Activated T-helper 1 cell treated with anti-CD3 and anti-CD28 coated beads, Interleukin-12 subunit alpha, Interleukin-12 subunit beta, Interleukin-2, Interleukin-4 antibody, amounts not matched to agents 30 ng/mL and 10 ng/mL and 1 ng/mL, durations not matched to agents 14 hours and 24 hours and 36 hours (primary cell): ENCODE measurements at regions of chr19 and their contacts with region 1.

Region 1: GRCh38 chr19:49640113-49640898 is at the start of gene RRAS:
- DNase-seq: peak; percentile 100
- H3K4me3 Mint-ChIP-seq: peak within 1 kb of the TSS; percentile 94
- H3K27ac Mint-ChIP-seq: peak within 1 kb of the TSS; percentile 99
- H3K4me1 Mint-ChIP-seq: peaks cover 55% of the 10 kb centered on the region
- H3K27me3 Mint-ChIP-seq: no peaks in the 10 kb centered on the region
- total RNA-seq, gene RRAS: 4.4 and 4.7 TPM in 2 replicates

Region 2: GRCh38 chr19:48637170-48637947 is 1002.9 kb before region 1 on chr19 and contains the start of gene DBP:
- intact Hi-C with region 1: loop called (anchors 2 kb)
- DNase-seq: peak; percentile 98
- H3K4me3 Mint-ChIP-seq: peak within 1 kb of the TSS; percentile 97
- H3K27ac Mint-ChIP-seq: peak within 1 kb of the TSS; percentile 100
- H3K4me1 Mint-ChIP-seq: peaks cover 29% of the 10 kb centered on the region
- H3K27me3 Mint-ChIP-seq: peaks cover 4% of the 10 kb centered on the region
- total RNA-seq, gene DBP: 8.5 and 9.1 TPM in 2 replicates

Region 3: DNA sequence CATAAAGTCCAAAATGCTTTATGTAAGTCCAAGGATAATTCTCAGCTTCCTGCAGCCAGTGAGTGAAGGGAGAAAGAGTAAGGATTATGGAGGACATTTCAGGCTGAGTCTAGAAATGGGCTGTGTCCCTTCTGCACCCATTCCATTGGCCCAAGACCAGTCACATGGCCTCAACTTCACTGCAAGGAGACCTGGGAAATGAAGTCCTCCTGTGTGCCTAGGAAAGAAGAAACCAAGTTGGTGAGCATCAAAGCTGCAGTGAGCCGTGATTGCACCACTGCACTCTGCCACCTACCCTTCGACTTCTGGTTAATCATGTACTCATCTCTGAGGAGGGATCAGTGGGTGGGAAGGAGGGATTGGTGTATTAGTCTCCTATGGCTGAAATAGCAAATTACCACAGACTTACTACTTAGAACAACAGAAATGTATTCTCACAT is 308.7 kb before region 1 on chr19:
- intact Hi-C with region 1: no loop called
- DNase-seq: peak; percentile 56
- H3K4me3 Mint-ChIP-seq: no peak overlapping the region
- H3K27ac Mint-ChIP-seq: peak overlapping the region; percentile 14
- H3K4me1 Mint-ChIP-seq: peaks cover 79% of the 10 kb centered on the region
- H3K27me3 Mint-ChIP-seq: no peaks in the 10 kb centered on the region

Region 4: DNA sequence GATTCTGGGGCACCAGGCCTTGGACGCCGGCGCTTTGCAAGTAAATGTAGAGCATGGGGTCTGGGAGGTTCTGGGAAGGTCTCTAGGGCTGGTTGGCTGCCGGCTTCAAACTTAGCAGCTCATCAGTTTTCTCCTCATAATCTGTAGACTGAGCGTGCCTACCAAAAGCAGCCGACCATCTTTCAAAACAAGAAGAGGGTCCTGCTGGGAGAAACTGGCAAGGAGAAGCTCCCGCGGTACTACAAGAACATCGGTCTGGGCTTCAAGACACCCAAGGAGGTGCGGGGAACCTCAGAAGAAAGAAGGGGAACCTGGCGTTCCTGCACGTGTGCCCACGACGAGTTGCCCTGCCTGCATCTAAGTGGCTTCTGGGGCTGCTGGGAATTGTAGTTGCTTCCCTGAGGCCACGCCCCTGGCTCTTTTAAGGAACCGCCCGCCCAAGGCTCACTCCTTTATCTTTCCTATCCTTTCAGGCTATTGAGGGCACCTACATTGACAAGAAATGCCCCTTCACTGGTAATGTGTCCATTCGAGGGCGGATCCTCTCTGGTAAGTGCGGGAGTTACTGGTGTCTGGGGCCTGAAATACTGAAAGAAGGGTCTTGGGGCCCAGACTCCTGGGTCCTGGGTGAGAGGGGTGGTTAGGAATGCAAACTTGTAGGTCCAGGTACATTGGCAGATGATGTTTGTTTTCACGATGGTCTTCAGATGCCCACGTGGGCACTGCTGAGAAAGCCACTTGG is 143.1 kb before region 1 on chr19:
- intact Hi-C with region 1: loop called (anchors 1 kb)
- DNase-seq: peak; percentile 65
- H3K4me3 Mint-ChIP-seq: peak overlapping the region; percentile 91
- H3K27ac Mint-ChIP-seq: peak overlapping the region; percentile 94
- H3K4me1 Mint-ChIP-seq: peaks cover 64% of the 10 kb centered on the region
- H3K27me3 Mint-ChIP-seq: no peaks in the 10 kb centered on the region

Region 5: DNA sequence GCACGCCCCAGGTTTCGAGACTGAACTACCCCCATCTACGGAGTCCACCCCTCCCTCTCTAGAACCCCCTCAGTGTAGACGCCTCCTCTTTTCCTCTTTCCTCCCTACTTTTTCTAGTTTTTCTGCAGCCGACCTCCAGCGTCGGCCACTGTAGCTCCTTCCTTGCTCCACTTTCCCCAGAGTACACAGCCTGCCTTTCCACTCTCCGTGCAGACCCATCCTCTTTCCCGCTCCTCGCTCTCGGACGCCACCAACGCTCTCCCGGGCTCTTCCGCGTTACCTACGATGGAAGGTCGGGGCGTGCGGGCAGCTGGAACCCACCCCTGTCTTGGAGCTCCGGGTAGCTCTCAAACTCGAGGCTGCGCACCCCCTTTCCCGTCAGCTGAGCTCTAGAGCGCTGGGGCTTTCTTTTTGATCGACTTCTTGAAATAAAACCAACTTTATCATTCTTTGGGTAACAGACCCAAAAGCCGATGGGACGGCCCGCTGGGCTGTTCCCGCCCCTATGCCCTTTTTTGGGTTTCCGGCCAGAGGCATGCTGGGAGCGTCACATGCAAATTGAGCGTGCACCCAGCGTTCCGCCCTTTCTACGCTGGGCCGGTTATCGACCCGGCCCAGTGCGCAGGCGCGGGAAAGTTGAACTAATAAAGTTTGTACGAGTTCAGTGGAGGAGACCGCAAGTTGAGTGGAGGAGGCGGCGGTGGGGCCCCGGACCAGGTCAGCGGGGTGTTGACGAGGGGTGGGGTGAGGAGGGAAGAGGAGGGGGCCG is 25.2 kb after region 1 on chr19 and contains the starts of genes BCL2L12 and IRF3:
- intact Hi-C with region 1: loop called (anchors 1 kb)
- DNase-seq: peak; percentile 98
- H3K4me3 Mint-ChIP-seq: peak within 1 kb of the TSS; percentile 98
- H3K27ac Mint-ChIP-seq: peak within 1 kb of the TSS; percentile 93
- H3K4me1 Mint-ChIP-seq: peaks cover 32% of the 10 kb centered on the region
- H3K27me3 Mint-ChIP-seq: no peaks in the 10 kb centered on the region
- total RNA-seq, gene BCL2L12: 72.2 and 73.7 TPM in 2 replicates
- total RNA-seq, gene IRF3: 149 and 156 TPM in 2 replicates

Region 6: DNA sequence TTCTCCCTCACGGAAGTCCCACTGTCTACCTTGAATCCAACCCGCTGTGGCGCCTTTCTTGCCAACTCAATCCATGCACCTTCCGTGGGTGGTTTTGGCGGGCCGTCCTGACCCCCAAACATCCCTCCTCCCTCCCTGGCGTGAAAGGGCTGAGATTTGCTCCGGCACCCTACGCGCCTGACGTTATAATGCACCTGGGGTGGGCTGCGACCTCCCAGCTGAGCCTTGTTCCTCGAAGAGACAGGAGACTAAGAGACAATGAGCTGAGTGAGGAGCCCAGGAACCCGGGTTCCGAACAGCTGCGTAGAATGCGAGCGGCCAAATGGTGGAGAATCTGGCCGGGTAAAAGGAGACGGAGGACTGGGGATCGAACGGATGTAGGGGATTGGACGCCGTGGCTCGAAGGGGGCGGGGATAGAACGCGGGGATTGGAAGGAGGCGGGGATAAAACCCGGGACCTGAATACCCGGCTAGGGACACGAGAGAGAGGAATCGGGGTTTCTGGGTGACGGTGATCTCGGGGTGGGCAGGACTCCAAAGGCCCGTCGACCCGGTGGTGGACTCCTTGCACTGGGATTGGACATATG is 50.4 kb after region 1 on chr19 and contains the start of gene CPT1C:
- intact Hi-C with region 1: no loop called
- DNase-seq: no peak
- H3K4me3 Mint-ChIP-seq: peak within 1 kb of the TSS; percentile 77
- H3K27ac Mint-ChIP-seq: peak within 1 kb of the TSS; percentile 70
- H3K4me1 Mint-ChIP-seq: peaks cover 19% of the 10 kb centered on the region
- H3K27me3 Mint-ChIP-seq: peaks cover 14% of the 10 kb centered on the region
- total RNA-seq, gene CPT1C: 3.1 and 3.9 TPM in 2 replicates

Region 7: GRCh38 chr19:49869441-49870176 is 229.3 kb after region 1 on chr19:
- intact Hi-C with region 1: loop called (anchors 1 kb)
- DNase-seq: peak; percentile 92
- H3K4me3 Mint-ChIP-seq: no peak overlapping the region
- H3K27ac Mint-ChIP-seq: no peak overlapping the region
- H3K4me1 Mint-ChIP-seq: peaks cover 36% of the 10 kb centered on the region
- H3K27me3 Mint-ChIP-seq: no peaks in the 10 kb centered on the region

Region 8: DNA sequence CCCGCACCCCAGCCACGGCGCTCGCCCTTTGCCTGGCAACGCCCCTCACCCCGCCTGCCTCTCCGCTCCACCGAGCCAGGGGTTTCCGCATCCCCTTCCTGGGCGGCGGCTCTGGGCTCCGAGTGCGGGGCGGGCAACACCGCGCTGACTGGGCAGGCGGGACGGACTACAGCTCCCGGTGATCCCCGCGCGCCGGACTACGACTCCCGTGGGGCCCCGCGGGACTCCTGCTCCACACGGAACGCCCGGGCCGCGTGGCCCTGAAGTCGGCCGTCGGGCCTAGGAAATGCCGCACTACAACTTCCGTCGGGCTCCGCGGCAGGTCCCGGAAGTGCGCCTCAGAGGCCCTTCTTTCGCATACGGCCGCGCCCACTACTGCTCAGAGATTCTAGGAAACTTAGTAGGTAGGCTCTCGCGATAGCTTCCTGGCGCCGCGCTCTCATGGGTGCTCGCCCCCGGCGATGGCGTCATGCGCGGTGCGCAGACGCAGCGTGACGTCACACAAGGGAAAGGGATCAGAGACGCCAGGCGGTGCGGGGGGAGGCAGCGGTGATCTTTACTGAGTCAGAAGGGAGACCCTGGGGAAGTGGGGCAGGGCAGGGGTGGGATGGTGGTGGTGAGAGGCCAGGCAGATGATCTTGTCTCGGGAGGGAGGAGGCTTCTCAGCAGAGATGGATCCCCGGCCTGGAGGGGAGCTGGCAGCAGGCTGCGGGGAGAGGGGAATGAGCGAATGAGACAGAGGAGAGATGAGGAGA is 870.9 kb after region 1 on chr19 and contains the start of gene JOSD2:
- intact Hi-C with region 1: loop called (anchors 2 kb)
- DNase-seq: peak; percentile 97
- H3K4me3 Mint-ChIP-seq: peak within 1 kb of the TSS; percentile 96
- H3K27ac Mint-ChIP-seq: peak within 1 kb of the TSS; percentile 99
- H3K4me1 Mint-ChIP-seq: peaks cover 18% of the 10 kb centered on the region
- H3K27me3 Mint-ChIP-seq: peaks cover 10% of the 10 kb centered on the region
- total RNA-seq, gene JOSD2: 38.5 and 41.7 TPM in 2 replicates